ENCODE measurements at regions of chr17 and their contacts with region 1.

Region 1: DNA sequence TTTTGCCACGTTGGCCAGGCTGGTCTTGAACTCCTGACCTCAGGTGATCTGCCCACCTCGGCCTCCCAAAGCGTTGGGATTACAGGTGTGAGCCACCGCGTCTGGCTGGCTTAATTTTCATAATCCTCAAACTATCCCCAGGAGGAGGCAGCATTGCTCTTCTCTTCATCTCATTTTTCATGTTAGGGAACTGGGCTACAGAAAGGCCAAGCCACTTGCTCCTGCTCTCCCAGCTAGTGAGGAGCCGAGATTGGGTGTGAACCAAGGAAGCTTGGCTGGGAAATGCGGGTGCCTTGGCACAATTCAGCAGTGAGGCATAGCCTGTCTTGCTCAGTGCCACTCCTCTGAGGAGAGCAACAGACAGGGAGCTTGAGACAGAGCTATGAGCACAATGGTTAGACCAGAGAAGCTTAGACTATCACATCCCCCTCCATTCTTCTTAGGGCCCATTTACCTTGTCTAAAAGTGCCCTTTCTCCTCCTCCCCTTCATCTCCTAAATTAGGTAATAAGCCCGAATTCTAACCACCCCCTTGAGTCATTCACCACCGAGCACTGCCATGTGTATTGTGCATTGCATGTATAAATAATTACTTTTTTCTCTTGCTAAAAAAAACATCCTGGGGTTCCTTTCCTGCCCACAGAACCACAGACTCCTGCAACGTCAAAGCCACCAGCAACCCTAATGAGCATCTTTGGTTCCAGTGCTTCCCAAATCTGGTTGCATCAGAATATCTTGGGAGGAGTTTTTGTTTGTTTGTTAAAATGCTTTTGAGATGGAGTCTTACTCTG is 20.0 kb upstream of the KIF19 start:
- DNase-seq: no peak
- H3K4me3 Mint-ChIP-seq: no peak overlapping the region
- H3K27ac Mint-ChIP-seq: no peak overlapping the region
- H3K4me1 Mint-ChIP-seq: peaks cover 23% of the 10 kb centered on the region
- H3K27me3 Mint-ChIP-seq: peaks cover 47% of the 10 kb centered on the region

Region 2: GRCh38 chr17:74354123-74354522 is 48.1 kb after region 1 on chr17:
- CTCF ChIA-PET with region 1: interaction called, 28 read pairs
- DNase-seq: peak; percentile 79
- H3K4me3 Mint-ChIP-seq: no peak overlapping the region
- H3K27ac Mint-ChIP-seq: no peak overlapping the region
- H3K4me1 Mint-ChIP-seq: peaks cover 10% of the 10 kb centered on the region
- H3K27me3 Mint-ChIP-seq: peaks cover 99% of the 10 kb centered on the region

Region 3: DNA sequence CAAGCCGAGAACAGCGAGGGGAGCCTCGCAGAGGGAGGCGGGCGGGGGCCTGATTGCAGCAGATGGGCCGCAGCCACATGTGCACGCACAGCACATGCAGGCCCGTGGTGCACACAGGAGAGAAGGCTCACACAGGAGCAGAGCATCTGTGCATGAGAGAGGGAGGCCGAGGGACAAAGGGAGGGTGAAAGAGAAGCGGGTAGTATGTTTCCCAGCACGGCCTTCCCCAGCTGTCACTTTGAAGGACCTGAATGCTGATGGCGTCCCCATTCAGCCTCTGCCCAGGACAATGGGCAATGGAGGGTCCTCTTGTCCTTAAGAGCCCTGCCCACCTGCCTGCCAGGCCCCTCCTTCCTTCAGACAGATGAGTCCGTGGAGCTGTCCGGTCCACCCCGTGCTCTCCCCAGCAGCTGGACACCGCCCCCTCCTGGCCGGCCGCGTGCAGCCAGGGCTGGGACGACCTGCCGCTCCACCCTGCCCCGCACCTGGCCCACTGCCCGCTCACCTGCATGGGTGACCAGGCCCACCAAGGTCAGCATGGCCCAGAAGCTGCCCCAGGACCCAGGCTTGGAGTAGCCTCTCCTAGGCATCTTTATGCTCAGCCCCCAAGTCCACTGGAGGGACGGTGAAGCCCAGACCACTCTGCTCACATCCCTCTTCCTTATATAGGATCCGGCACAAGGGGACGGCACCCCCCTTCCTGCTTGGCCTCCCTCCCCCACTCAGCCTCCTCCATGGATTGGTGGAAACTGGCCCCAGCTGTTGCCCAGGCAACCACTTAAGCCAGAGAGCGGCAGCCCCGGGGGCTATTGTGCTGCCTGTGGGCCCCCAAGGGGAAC is 55.4 kb after region 1 on chr17 and contains the start of gene BTBD17:
- CTCF ChIA-PET with region 1: interaction called, 27 read pairs
- DNase-seq: peak; percentile 61
- H3K4me3 Mint-ChIP-seq: no peak within 1 kb of the TSS
- H3K27ac Mint-ChIP-seq: no peak within 1 kb of the TSS
- H3K4me1 Mint-ChIP-seq: peaks cover 5% of the 10 kb centered on the region
- H3K27me3 Mint-ChIP-seq: peaks cover 79% of the 10 kb centered on the region